Adrenal gland (tissue), 19 donors: ENCODE measurements at regions of chr2 and their contacts with region 1.

Region 1: DNA sequence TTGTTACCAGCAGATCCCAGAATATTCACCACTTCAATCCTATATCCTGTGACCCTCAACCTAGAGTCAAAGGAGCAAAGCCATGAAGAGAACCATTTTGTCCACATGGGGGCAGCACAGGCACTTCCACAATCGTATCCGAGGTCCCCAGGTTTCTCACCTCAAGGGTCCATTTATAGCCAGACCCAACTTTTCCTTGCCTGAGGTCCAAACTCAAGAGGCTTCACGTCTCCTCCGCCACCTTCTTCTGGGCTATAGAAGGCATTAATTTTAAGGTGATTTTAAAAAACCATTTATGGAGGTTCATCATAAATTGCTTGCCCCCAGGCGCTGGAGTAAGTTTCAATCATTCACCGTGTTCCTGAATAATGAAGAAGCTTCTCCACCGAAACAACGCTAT is 111.6 kb upstream of the NABP1 start:
- DNase-seq: peak; percentile 43 to 80 (median 60)
- H3K4me3 ChIP-seq: no peak overlapping the region
- H3K27ac ChIP-seq: no peak overlapping the region
- H3K4me1 ChIP-seq: peaks cover 0 to 6% of the 10 kb centered on the region in 2 donors
- H3K27me3 ChIP-seq: no peaks in the 10 kb centered on the region
- CTCF ChIP-seq: peak; percentile 42 to 72 (median 66)
- POLR2A ChIP-seq: no peak

Region 2: GRCh38 chr2:191691016-191691735 is 124.8 kb after region 1 on chr2:
- intact Hi-C with region 1: loop called (anchors 5 kb)
- DNase-seq: peak; percentile 25 to 76 (median 51)
- H3K4me3 ChIP-seq: no peak overlapping the region
- H3K27ac ChIP-seq: no peak overlapping the region
- H3K4me1 ChIP-seq: peaks cover 0 to 10% of the 10 kb centered on the region in 2 donors
- H3K27me3 ChIP-seq: no peaks in the 10 kb centered on the region
- CTCF ChIP-seq: peak; percentile 60 to 81 (median 76)
- POLR2A ChIP-seq: peak in 1 of 2 donors; percentile 9

Region 3: GRCh38 chr2:192151853-192152252 is 585.5 kb after region 1 on chr2:
- intact Hi-C with region 1: loop called in 1 of 2 experiments (anchors 10 kb)
- DNase-seq: no peak
- H3K4me3 ChIP-seq: no peak overlapping the region
- H3K27ac ChIP-seq: no peak overlapping the region
- H3K4me1 ChIP-seq: peaks cover 0 to 8% of the 10 kb centered on the region in 2 donors
- H3K27me3 ChIP-seq: no peaks in the 10 kb centered on the region
- CTCF ChIP-seq: no peak
- POLR2A ChIP-seq: no peak

Region 4: DNA sequence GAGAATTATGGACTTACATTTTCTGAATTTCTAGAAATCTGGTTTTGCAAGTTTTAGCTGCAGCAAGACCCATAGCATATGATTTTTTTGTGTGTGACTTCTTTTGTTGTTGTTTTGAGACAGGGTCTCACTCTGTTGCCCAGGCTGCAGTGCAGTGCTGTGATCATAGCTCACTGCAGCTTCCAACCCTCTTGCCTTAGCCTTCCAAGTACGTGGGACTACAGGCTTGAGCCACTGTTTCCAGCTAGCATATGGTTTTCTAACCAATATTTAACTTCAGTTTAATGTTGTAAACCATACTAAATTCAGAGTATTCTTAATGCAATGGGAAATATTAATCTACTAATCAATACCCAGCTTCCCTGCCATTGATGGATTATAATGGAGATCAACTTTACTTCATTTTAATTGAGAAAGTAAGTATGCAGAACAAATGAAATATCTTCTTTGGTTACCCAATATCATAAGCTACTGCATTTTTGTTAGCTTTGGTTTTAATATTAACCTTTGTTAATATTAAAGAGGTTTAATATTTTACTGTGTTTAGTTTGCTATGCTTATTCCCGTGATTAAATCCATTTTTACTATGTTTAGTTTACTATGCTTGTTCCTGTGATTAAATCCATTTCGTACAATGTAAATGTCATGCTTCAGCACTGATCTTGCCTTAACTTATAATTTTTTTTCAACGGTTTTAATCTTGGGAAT is 901.8 kb after region 1 on chr2:
- intact Hi-C with region 1: no loop called
- DNase-seq: no peak
- H3K4me3 ChIP-seq: no peak overlapping the region
- H3K27ac ChIP-seq: no peak overlapping the region
- H3K4me1 ChIP-seq: no peaks in the 10 kb centered on the region
- H3K27me3 ChIP-seq: no peaks in the 10 kb centered on the region
- CTCF ChIP-seq: no peak
- POLR2A ChIP-seq: no peak